IMR-90 (cell line): ENCODE measurements at regions of chr11 and their contacts with region 1.

Region 1: GRCh38 chr11:57456960-57457642 is 3.2 kb upstream of the RTN4RL2 start:
- DNase-seq: peak; percentile 77
- ATAC-seq: peak; percentile 89
- H3K4me3 ChIP-seq: no peak overlapping the region
- H3K27ac ChIP-seq: no peak overlapping the region
- H3K4me1 ChIP-seq: peaks cover 3% of the 10 kb centered on the region; the same call in 1 of the 2 replicates
- H3K27me3 ChIP-seq: peaks cover 51% of the 10 kb centered on the region
- CTCF ChIP-seq: peak; percentile 97
- POLR2A ChIP-seq: no peak
- RAD21 ChIP-seq: peak; percentile 92

Region 2: DNA sequence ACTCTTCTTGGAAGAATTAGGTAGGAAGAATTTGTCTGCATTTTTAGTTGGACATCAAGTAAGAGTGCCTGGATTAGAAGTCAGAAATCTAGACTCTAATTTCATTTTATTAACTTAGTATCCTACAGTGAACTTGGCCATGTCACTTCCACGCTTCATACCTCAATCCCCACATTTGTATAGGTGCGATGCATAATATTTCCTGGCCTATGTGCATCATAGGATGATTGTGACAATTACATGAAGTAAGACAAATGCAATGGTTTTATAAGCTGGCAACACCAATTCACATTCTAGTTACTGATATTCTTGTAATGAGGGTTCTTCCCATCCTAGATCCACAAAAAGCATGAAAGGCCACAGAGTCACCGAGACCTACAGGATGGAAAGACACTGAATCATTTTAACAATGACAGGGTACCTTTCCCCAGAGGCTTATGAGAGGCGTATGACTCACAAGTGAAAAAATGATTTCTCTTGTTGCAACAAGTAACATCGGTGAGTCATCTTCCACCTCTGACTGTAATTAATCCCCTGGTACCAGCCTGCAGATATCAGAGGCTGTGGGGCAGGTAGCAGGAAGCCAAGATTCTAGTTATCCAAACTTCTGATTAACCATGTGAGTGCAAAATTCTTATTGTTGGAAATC is 524.4 kb before region 1 on chr11:
- CTCF ChIA-PET with region 1: no interaction called
- POLR2A ChIA-PET with region 1: no interaction called
- dilution Hi-C with region 1: no loop called
- in situ Hi-C with region 1: no loop called
- intact Hi-C with region 1: no loop called
- DNase-seq: peak; percentile 28
- ATAC-seq: no peak
- H3K4me3 ChIP-seq: no peak overlapping the region
- H3K27ac ChIP-seq: no peak overlapping the region
- H3K4me1 ChIP-seq: no peaks in the 10 kb centered on the region
- H3K27me3 ChIP-seq: no peaks in the 10 kb centered on the region
- CTCF ChIP-seq: no peak
- POLR2A ChIP-seq: no peak
- RAD21 ChIP-seq: no peak

Region 3: GRCh38 chr11:57294605-57295131 is 162.4 kb before region 1 on chr11:
- CTCF ChIA-PET with region 1: no interaction called
- POLR2A ChIA-PET with region 1: no interaction called
- dilution Hi-C with region 1: no loop called
- in situ Hi-C with region 1: no loop called
- intact Hi-C with region 1: no loop called
- DNase-seq: peak; percentile 52
- ATAC-seq: peak; percentile 42
- H3K4me3 ChIP-seq: no peak overlapping the region
- H3K27ac ChIP-seq: no peak overlapping the region
- H3K4me1 ChIP-seq: peaks cover 16% of the 10 kb centered on the region
- H3K27me3 ChIP-seq: no peaks in the 10 kb centered on the region
- CTCF ChIP-seq: no peak
- POLR2A ChIP-seq: no peak
- RAD21 ChIP-seq: no peak

Region 4: GRCh38 chr11:57335343-57336110 is 121.6 kb before region 1 on chr11 and contains the start of gene SSRP1:
- CTCF ChIA-PET with region 1: no interaction called
- POLR2A ChIA-PET with region 1: no interaction called
- dilution Hi-C with region 1: no loop called
- in situ Hi-C with region 1: no loop called
- intact Hi-C with region 1: no loop called
- DNase-seq: peak; percentile 83
- ATAC-seq: peak; percentile 98
- H3K4me3 ChIP-seq: peak within 1 kb of the TSS; percentile 76
- H3K27ac ChIP-seq: peak within 1 kb of the TSS; percentile 77
- H3K4me1 ChIP-seq: peaks cover 8% of the 10 kb centered on the region
- H3K27me3 ChIP-seq: peaks cover 20% of the 10 kb centered on the region
- CTCF ChIP-seq: no peak
- POLR2A ChIP-seq: peak; percentile 66; the same call in 1 of the 2 replicates
- RAD21 ChIP-seq: no peak
- total RNA-seq, gene SSRP1: 144 and 146 TPM in 2 replicates

Region 5: DNA sequence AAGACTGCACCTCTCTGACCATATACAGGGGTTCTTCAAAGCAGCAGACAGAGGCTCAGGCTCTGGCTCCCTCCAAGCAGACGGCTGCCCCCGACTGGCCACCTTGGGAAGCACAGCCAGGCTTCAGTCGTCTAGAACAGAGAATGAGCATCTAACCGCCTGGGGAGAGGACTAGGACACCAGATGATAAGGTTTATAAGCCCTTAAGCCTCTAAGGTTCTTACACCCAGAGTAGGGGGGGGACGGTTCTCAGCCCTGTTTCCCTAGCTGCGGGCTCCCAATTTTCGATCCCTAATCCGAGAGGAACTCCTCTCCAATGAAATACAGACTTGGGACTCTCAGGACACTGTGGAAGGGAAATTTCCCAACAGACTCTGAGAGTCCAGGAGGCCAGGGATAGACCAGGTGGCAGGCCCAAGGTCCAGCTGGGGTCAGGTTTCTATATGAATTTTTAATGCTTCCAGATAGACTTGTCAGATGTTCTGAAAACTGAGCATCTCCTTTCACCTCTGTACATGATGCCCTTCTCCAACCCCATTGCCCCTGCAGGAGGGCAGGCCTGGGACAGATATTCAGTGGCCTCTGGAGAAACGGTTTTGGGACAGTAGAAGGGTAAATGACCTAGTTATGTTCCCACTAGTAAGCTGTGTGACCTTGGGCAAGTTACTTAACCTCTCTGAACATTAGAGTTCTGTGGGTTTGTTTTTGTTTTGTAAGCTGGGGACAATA is 23.5 kb after region 1 on chr11:
- CTCF ChIA-PET with region 1: interaction called, 8 read pairs
- POLR2A ChIA-PET with region 1: no interaction called
- dilution Hi-C with region 1: no loop called
- in situ Hi-C with region 1: no loop called
- intact Hi-C with region 1: loop called (anchors 1 kb)
- DNase-seq: peak; percentile 25
- ATAC-seq: peak; percentile 42; the same call in 1 of the 2 replicates
- H3K4me3 ChIP-seq: no peak overlapping the region
- H3K27ac ChIP-seq: no peak overlapping the region
- H3K4me1 ChIP-seq: no peaks in the 10 kb centered on the region
- H3K27me3 ChIP-seq: peaks cover 49% of the 10 kb centered on the region
- CTCF ChIP-seq: peak; percentile 60
- POLR2A ChIP-seq: no peak
- RAD21 ChIP-seq: peak; percentile 36